BJ (cell line): ENCODE measurements at regions of chr12 and their contacts with region 1.

Region 1: DNA sequence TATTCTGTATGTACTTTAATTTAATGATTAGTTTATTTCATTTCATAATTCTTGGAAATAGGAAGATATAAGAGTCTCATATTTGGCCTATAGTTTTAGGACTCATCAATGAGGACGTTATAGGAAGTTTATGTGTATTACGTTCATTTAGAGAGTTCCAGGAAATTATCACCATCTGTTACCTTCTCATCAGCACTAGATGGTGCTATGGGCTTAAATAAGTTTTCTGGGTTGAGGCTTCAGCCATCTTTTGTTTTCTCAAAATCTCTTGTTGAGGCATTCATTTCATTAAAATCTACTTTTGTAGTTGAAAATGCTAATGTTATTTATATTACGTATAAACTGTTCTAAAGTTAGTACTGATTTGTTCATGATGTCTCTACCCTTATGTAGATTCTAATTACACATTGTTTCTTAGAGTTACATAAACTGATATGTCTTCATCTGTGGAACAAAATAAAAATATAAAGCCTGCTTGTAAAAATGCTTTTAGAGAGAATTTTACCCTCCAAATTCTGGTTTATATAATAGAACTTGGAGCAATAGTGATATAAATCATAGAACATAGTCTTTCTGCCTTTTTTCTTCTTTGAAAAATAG is 89.2 kb downstream of the CFAP54 start:
- DNase-seq: peak; percentile 7
- H3K4me3 ChIP-seq: no peak overlapping the region
- H3K27me3 ChIP-seq: no peaks in the 10 kb centered on the region
- CTCF ChIP-seq: peak; percentile 59

Region 2: GRCh38 chr12:97308576-97309198 is 730.1 kb after region 1 on chr12:
- CTCF ChIA-PET with region 1: interaction called, 45 read pairs
- POLR2A ChIA-PET with region 1: no interaction called
- DNase-seq: peak; percentile 9
- H3K4me3 ChIP-seq: no peak overlapping the region
- H3K27me3 ChIP-seq: no peaks in the 10 kb centered on the region
- CTCF ChIP-seq: peak; percentile 65